ENCODE measurements at regions of chr12 and their contacts with region 1.

Region 1: GRCh38 chr12:55738123-55739024 is 4.5 kb upstream of the GDF11 start:
- DNase-seq: peak; percentile 75 to 88
- ATAC-seq: peak; percentile 66 to 86 (median 77)
- H3K4me3 ChIP-seq: peak overlapping the region in 9 of 10 donors; percentile 34 to 65 (median 61)
- H3K27ac ChIP-seq: peak overlapping the region in 9 of 10 donors; percentile 17 to 84 (median 70)
- H3K4me1 ChIP-seq: peaks cover 8 to 27% (median 21%) of the 10 kb centered on the region in 9 donors
- H3K27me3 ChIP-seq: no peaks in the 10 kb centered on the region
- CTCF ChIP-seq: peak; percentile 71 to 91 (median 89)

Region 2: DNA sequence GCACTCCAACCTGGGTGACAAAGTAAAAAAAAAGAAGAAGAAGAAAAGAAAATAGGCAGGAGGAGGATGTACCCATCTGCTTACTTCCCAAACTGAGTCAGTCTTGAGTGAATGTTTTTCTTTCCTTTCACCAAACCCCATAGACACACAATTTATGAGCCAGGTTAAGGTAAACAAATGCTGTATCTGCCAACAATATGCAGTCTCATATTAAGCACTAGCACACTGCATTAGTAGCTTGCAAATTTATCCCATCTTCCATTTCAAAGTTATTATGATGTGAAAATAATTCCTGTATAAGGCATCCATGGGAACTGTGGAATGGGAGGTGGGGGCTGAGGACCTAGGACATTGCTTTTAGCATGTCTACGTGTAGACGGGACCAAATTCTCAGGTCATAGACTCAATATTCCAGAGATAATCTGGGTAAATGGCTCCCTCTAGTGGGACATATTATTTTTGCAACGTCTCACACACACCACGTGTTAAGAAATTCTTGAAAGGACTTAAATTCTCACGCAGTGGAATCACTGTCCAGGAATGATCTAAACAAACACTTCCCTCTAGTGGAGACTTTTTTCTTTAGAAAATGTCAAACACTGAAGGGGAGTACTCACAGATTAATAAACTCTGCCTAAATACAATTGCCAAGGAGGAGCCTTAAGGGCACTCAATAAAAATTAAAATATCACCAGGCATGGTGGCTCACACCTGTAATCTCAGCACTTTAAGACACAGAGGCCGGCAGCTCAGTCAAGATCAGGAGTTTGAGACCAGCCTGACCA is 118.8 kb before region 1 on chr12:
- intact Hi-C with region 1: no loop called
- DNase-seq: peak in 1 of 2 donors; percentile 80
- ATAC-seq: peak; percentile 72 to 93 (median 92)
- H3K4me3 ChIP-seq: no peak overlapping the region
- H3K27ac ChIP-seq: no peak overlapping the region
- H3K4me1 ChIP-seq: peaks cover 0 to 10% (median 0%) of the 10 kb centered on the region in 9 donors
- H3K27me3 ChIP-seq: peaks cover 0 to 17% (median 0%) of the 10 kb centered on the region in 7 donors
- CTCF ChIP-seq: peak; percentile 67 to 85 (median 81)

Region 3: GRCh38 chr12:55681142-55682077 is 57.0 kb before region 1 on chr12:
- intact Hi-C with region 1: loop called in 1 of 10 experiments (anchors 5 kb)
- DNase-seq: peak; percentile 65 to 67
- ATAC-seq: peak; percentile 74 to 88 (median 80)
- H3K4me3 ChIP-seq: peak overlapping the region; percentile 14 to 52 (median 39)
- H3K27ac ChIP-seq: peak overlapping the region; percentile 0 to 79 (median 55)
- H3K4me1 ChIP-seq: peaks cover 0 to 27% (median 14%) of the 10 kb centered on the region in 9 donors
- H3K27me3 ChIP-seq: no peaks in the 10 kb centered on the region
- CTCF ChIP-seq: peak in 8 of 9 donors; percentile 2 to 46 (median 32)

Region 4: DNA sequence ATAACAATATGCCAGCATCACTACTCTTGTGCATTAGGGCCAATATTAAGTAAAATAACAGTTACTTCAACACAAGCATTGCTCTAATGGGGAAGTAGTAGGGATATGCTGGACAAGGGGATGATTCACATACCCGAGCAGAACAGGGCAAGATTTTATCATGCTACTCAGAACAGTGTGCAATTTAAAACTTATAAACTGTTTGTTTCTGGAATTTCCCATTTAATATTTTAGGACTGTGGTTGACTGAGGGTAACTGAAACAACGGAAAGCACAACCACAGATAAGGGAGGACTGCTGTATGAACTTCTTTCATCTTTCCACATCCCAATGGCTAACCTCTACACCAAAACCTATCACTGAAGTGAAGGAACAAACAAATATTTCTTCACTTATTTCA is 42.3 kb after region 1 on chr12:
- intact Hi-C with region 1: no loop called
- DNase-seq: no peak
- ATAC-seq: no peak
- H3K4me3 ChIP-seq: no peak overlapping the region
- H3K27ac ChIP-seq: no peak overlapping the region
- H3K4me1 ChIP-seq: no peaks in the 10 kb centered on the region
- H3K27me3 ChIP-seq: no peaks in the 10 kb centered on the region
- CTCF ChIP-seq: no peak

Region 5: GRCh38 chr12:55817346-55818139 is 79.2 kb after region 1 on chr12 and contains the starts of genes ORMDL2 and SARNP:
- intact Hi-C with region 1: loop called in 2 of 10 experiments (anchors 5 to 10 kb)
- DNase-seq: peak; percentile 92 to 99
- ATAC-seq: peak; percentile 98 to 99 (median 99)
- H3K4me3 ChIP-seq: peak within 1 kb of the TSS; percentile 57 to 89 (median 76)
- H3K27ac ChIP-seq: peak within 1 kb of the TSS; percentile 45 to 96 (median 84)
- H3K4me1 ChIP-seq: peaks cover 4 to 54% (median 37%) of the 10 kb centered on the region in 9 donors
- H3K27me3 ChIP-seq: no peaks in the 10 kb centered on the region
- CTCF ChIP-seq: no peak
- total RNA-seq, gene ORMDL2: 10.3 to 36.9 (median 17.4) TPM
- total RNA-seq, gene SARNP: 47.5 to 58.0 (median 53.2) TPM

Region 6: GRCh38 chr12:55899082-55899481 is 160.7 kb after region 1 on chr12:
- intact Hi-C with region 1: no loop called
- DNase-seq: no peak
- ATAC-seq: no peak
- H3K4me3 ChIP-seq: no peak overlapping the region
- H3K27ac ChIP-seq: no peak overlapping the region
- H3K4me1 ChIP-seq: no peaks in the 10 kb centered on the region
- H3K27me3 ChIP-seq: no peaks in the 10 kb centered on the region
- CTCF ChIP-seq: no peak

Region 7: GRCh38 chr12:55931780-55932550 is 193.6 kb after region 1 on chr12:
- intact Hi-C with region 1: loop called in 4 of 10 experiments (anchors 5 to 10 kb)
- DNase-seq: peak; percentile 54 to 70
- ATAC-seq: peak; percentile 36 to 65 (median 60)
- H3K4me3 ChIP-seq: peak overlapping the region; percentile 30 to 83 (median 76)
- H3K27ac ChIP-seq: peak overlapping the region; percentile 34 to 99 (median 74)
- H3K4me1 ChIP-seq: peaks cover 0 to 68% (median 27%) of the 10 kb centered on the region in 9 donors
- H3K27me3 ChIP-seq: no peaks in the 10 kb centered on the region
- CTCF ChIP-seq: no peak

Region 8: DNA sequence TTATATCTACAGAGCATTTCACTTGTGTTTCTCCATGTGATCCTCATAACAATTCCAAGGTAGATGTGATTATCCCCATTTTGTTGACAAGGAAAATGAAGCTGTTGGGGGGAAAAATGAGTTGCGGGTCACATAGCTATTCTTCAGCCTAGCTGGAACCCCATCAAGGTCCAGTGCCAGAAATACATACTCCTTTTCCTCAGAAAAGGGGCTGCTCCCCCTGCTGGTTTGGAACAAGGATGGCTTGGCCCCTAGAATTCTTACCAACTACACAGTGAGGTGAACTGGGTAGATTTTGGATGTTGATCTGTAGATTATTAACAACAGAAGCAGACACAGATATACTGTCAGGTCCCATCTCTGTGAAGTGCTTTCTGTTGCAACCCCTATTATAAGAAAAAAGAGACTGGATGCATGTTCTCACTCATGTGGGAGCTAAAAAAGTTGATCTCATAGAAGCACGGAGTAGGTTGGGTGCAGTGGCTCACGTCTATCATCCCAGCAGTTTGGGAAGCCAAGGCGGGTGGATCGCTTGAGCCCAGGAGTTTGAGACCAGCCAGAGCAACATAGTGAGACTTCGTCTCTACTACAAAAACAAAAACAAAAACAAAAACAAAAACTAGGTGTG is 291.4 kb after region 1 on chr12:
- intact Hi-C with region 1: loop called in 2 of 10 experiments (anchors 5 to 10 kb)
- DNase-seq: peak in 1 of 2 donors; percentile 28
- ATAC-seq: peak in 5 of 8 donors; percentile 37 to 70 (median 43)
- H3K4me3 ChIP-seq: no peak overlapping the region
- H3K27ac ChIP-seq: no peak overlapping the region
- H3K4me1 ChIP-seq: peaks cover 0 to 9% (median 0%) of the 10 kb centered on the region in 9 donors
- H3K27me3 ChIP-seq: no peaks in the 10 kb centered on the region
- CTCF ChIP-seq: peak in 8 of 9 donors; percentile 37 to 66 (median 58)

Region 9: DNA sequence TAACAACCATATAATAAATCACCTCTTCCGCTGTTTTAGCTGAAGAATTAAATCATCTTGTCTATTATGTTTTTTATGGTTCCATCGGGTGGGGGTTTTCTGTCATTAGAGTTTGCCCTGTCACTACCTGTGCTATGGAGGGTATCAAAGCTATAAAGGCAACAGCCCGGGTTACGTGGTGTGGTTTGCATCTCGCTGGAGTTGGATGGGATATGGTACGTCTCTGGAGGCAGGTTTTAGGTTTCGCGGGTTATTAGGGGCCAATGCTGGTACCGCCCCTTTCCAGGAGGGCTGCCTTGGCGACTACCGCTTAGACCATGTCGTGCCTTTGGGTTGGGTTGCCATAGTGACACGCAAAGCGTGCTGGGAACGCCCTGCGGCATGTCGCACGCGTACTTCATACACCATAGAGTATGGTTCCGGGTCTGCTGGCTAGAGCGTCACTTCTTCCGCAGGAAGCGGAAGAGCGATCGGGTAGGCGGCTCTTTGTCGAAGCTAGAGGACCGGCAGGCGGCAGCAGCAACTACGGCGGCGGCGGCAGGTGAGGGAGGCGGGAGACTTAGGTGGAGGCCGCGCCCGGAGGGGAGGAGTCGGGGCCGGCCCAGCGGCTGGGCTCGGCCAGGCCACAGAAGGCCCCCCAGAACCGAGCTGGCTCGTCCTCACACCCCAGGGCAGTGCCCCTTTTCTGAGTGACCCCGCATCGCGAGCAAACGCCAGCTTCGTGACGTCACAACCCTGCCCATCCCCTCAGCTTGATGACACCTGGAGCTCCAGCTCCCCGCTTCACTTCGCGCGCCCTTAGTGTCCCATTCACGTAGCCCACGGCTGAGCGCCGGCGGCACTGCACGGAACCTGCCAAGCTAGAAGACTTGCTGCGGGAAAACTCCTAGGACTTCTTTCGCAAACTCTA is 379.7 kb after region 1 on chr12 and contains the start of gene ZC3H10:
- intact Hi-C with region 1: loop called in 2 of 10 experiments (anchors 10 kb)
- DNase-seq: peak; percentile 93 to 97
- ATAC-seq: peak; percentile 81 to 91 (median 88)
- H3K4me3 ChIP-seq: peak within 1 kb of the TSS; percentile 53 to 84 (median 74)
- H3K27ac ChIP-seq: peak within 1 kb of the TSS; percentile 82 to 95 (median 91)
- H3K4me1 ChIP-seq: peaks cover 0 to 56% (median 38%) of the 10 kb centered on the region in 9 donors
- H3K27me3 ChIP-seq: no peaks in the 10 kb centered on the region
- CTCF ChIP-seq: peak in 8 of 9 donors; percentile 43 to 78 (median 52)
- total RNA-seq, gene ZC3H10: 3.6 to 5.8 (median 4.9) TPM

Region 10: GRCh38 chr12:56510786-56511185 is 772.4 kb after region 1 on chr12:
- intact Hi-C with region 1: no loop called
- DNase-seq: no peak
- ATAC-seq: no peak
- H3K4me3 ChIP-seq: no peak overlapping the region
- H3K27ac ChIP-seq: no peak overlapping the region
- H3K4me1 ChIP-seq: peaks cover 0 to 7% (median 0%) of the 10 kb centered on the region in 9 donors
- H3K27me3 ChIP-seq: no peaks in the 10 kb centered on the region
- CTCF ChIP-seq: no peak